Heart left ventricle (tissue), 16 donors: ENCODE measurements at regions of chr6 and their contacts with region 1.

Region 1: DNA sequence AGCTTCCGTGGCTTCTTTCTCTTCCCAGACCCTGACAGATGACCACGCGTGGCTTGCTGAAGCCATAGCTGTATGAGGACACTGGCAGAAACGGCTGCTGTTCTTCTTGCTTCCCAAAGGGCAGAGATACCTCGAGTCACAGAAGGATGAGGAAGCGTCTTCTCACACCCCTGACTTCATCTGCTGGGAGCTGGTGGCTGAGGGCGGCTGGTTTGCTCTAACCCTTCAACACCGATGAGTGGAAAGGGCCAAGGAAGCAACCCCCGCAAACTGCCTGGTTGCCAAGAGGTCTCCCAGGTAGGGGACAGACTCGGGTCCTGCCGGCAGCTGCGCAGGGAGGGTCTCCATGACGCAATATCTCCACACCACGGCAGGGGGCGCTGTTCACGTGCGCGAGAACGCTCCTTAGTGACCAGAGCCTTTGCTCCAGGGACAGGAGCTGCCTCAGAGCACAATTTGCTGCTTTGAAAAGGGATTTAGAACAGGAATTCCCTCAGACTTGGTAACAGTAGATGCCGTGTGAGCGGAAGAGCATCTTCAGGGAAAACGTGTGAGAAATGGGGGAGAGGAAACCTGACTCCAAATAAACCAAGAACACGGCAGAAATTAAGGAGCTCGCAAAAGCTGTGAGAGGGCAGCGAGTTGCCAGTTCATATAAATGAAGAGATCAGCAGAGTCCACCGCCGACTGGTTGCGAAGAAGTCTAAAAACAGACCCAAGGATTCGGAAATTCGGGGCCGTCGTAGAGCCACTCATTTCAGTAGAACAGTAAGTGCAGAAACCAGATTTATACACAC is 80.2 kb downstream of the ERMARD start:
- DNase-seq: peak; percentile 71 to 91 (median 75)
- ATAC-seq: peak; percentile 78 to 92 (median 88)
- H3K4me3 ChIP-seq: no peak overlapping the region
- H3K27ac ChIP-seq: no peak overlapping the region
- H3K4me1 ChIP-seq: peaks cover 0 to 15% (median 5%) of the 10 kb centered on the region in 12 donors
- H3K27me3 ChIP-seq: peaks cover 0 to 20% (median 0%) of the 10 kb centered on the region in 9 donors
- CTCF ChIP-seq: peak; percentile 85 to 97 (median 93)
- POLR2A ChIP-seq: no peak

Region 2: GRCh38 chr6:169766232-169766631 is 65.4 kb before region 1 on chr6:
- intact Hi-C with region 1: no loop called
- DNase-seq: no peak
- ATAC-seq: no peak
- H3K4me3 ChIP-seq: no peak overlapping the region
- H3K27ac ChIP-seq: no peak overlapping the region
- H3K4me1 ChIP-seq: no peaks in the 10 kb centered on the region
- H3K27me3 ChIP-seq: no peaks in the 10 kb centered on the region
- CTCF ChIP-seq: no peak
- POLR2A ChIP-seq: no peak

Region 3: DNA sequence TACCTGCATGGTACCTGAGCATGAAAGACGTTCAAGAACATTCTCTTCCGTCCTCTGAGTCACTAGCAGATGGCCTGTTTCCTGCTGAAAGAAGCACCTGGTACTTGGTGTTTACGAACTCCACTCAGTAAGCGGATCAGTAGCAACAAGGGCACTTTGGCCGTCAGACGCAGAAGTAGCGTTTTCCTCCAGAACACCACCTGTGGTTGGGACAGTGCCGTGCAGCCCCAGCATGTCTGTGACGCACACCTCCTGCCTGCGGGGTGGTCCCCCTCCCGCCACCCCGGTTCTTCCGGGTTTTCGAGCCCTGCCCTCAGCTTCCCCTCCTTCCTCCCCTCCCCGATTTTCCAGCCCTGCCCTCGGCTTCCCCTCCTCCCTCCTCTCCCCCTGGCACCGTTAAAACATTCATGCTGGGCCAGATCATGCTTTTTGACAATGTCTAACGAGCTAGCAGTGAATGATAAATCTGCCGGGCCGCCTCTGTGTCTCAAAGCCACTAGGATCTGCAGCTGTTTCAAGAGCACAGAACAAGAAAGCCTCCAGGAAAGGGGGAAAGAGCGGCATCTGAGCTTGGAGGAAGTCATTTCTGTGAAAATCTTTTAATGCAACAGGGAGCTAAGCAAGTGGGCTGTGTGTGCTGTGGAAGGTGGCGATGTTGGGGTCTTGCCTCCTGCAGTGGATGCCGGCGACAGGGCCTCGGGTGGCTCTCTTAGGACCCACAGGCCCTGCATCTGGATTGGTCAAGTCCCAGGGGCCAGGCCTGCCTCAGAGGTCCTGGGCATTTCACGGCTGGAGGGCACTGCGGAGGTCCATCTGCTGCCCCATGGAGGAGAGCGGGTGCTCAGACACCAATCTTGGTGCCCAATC is 127.7 kb after region 1 on chr6:
- intact Hi-C with region 1: loop called in 3 of 10 experiments (anchors 10 kb)
- DNase-seq: peak in 1 of 5 donors; percentile 27
- ATAC-seq: peak in 2 of 4 donors; percentile 28 to 53
- H3K4me3 ChIP-seq: no peak overlapping the region
- H3K27ac ChIP-seq: no peak overlapping the region
- H3K4me1 ChIP-seq: peaks cover 0 to 15% (median 2%) of the 10 kb centered on the region in 12 donors
- H3K27me3 ChIP-seq: peaks cover 0 to 14% (median 0%) of the 10 kb centered on the region in 9 donors
- CTCF ChIP-seq: peak in 1 of 12 donors; percentile 6
- POLR2A ChIP-seq: no peak

Region 4: DNA sequence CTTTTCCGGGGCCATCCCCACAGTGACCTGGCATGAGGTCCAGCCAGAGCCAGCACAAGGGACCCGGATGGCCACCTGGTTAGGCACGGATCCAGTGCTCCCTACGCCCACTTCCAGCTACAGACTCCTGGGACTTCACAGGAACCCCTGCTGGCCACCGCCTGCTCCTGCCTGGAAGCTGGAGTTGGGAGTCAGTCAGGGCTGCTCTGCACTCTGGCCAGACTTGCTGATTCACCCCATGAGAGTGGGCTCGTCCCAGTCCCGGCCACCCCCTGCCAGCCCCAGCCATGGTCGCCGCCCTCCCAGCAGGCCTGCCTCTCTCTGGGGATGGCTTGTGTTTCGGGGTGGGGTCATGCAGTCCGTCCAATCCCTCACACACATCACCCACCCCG is 333.4 kb after region 1 on chr6:
- intact Hi-C with region 1: loop called in 1 of 10 experiments (anchors 10 kb)
- DNase-seq: peak; percentile 63 to 79 (median 69)
- ATAC-seq: peak; percentile 29 to 85 (median 70)
- H3K4me3 ChIP-seq: no peak overlapping the region
- H3K27ac ChIP-seq: peak overlapping the region in 9 of 12 donors; percentile 14 to 72 (median 59)
- H3K4me1 ChIP-seq: peaks cover 0 to 34% (median 23%) of the 10 kb centered on the region in 12 donors
- H3K27me3 ChIP-seq: no peaks in the 10 kb centered on the region
- CTCF ChIP-seq: peak in 10 of 12 donors; percentile 16 to 48 (median 30)
- POLR2A ChIP-seq: no peak

Region 5: GRCh38 chr6:170516783-170517616 is 685.4 kb after region 1 on chr6:
- intact Hi-C with region 1: loop called in 4 of 10 experiments (anchors 1 to 5 kb)
- DNase-seq: peak in 3 of 5 donors; percentile 22 to 55 (median 41)
- ATAC-seq: peak in 3 of 4 donors; percentile 73 to 85 (median 74)
- H3K4me3 ChIP-seq: no peak overlapping the region
- H3K27ac ChIP-seq: no peak overlapping the region
- H3K4me1 ChIP-seq: peaks cover 0 to under 1% (median 0%) of the 10 kb centered on the region in 12 donors
- H3K27me3 ChIP-seq: no peaks in the 10 kb centered on the region
- CTCF ChIP-seq: peak; percentile 55 to 77 (median 68)
- POLR2A ChIP-seq: no peak

Region 6: GRCh38 chr6:170529839-170530469 is 698.3 kb after region 1 on chr6:
- intact Hi-C with region 1: loop called in 8 of 10 experiments (anchors 1 to 5 kb)
- DNase-seq: peak; percentile 74 to 80 (median 77)
- ATAC-seq: peak; percentile 45 to 86 (median 86)
- H3K4me3 ChIP-seq: no peak overlapping the region
- H3K27ac ChIP-seq: peak overlapping the region in 1 of 12 donors; percentile 34
- H3K4me1 ChIP-seq: peaks cover 0 to 4% (median 0%) of the 10 kb centered on the region in 12 donors
- H3K27me3 ChIP-seq: no peaks in the 10 kb centered on the region
- CTCF ChIP-seq: peak; percentile 79 to 93 (median 86)
- POLR2A ChIP-seq: no peak